CD4-positive, alpha-beta T cell (primary cell): ENCODE measurements at regions of chr9 and their contacts with region 1.

Region 1: DNA sequence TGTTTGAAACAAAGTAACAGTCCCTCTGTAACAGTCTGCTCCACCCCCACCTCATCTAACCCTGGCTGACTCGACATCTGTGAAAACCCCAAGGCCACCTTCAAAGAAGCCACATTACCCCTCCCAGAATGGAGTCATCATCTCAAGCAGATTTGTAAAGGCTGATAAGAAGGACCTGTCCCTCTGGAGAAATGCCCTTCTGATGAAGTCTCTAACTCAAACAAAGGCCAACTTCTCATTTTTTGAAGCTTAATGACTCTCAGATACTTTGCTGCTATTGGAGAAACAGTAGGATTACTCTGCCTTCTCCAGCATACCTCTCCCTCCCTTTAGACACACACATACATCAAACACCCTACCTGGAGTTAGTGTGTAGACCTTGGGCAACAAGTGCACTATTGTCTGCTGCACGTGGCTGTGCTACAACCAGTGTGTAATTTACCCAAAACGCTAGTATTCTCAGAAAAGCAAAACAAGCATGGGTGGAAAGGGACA is 5.3 kb upstream of the SUSD1 start:
- DNase-seq: peak in 9 of 14 experiments; percentile 10 to 86 (median 32)
- ATAC-seq: peak; percentile 31
- H3K4me3 ChIP-seq: no peak overlapping the region
- H3K4me3 Mint-ChIP-seq: peak overlapping the region; percentile 18
- H3K27ac ChIP-seq: peak overlapping the region; percentile 0 to 26
- H3K27ac Mint-ChIP-seq: peak overlapping the region; percentile 60
- H3K4me1 ChIP-seq: peaks cover 48% of the 10 kb centered on the region
- H3K4me1 Mint-ChIP-seq: peaks cover 60% of the 10 kb centered on the region
- H3K27me3 ChIP-seq: no peaks in the 10 kb centered on the region
- H3K27me3 Mint-ChIP-seq: no peaks in the 10 kb centered on the region
- CTCF ChIP-seq: no peak

Region 2: GRCh38 chr9:112241516-112241915 is 61.1 kb after region 1 on chr9:
- CTCF ChIA-PET with region 1: no interaction called
- POLR2A ChIA-PET with region 1: no interaction called
- intact Hi-C with region 1: loop called in 1 of 2 experiments (anchors 5 kb)
- DNase-seq: no peak
- ATAC-seq: no peak
- H3K4me3 ChIP-seq: no peak overlapping the region
- H3K4me3 Mint-ChIP-seq: no peak overlapping the region
- H3K27ac ChIP-seq: no peak overlapping the region
- H3K27ac Mint-ChIP-seq: no peak overlapping the region
- H3K4me1 ChIP-seq: no peaks in the 10 kb centered on the region
- H3K4me1 Mint-ChIP-seq: peaks cover 10% of the 10 kb centered on the region
- H3K27me3 ChIP-seq: no peaks in the 10 kb centered on the region
- H3K27me3 Mint-ChIP-seq: no peaks in the 10 kb centered on the region
- CTCF ChIP-seq: no peak

Region 3: DNA sequence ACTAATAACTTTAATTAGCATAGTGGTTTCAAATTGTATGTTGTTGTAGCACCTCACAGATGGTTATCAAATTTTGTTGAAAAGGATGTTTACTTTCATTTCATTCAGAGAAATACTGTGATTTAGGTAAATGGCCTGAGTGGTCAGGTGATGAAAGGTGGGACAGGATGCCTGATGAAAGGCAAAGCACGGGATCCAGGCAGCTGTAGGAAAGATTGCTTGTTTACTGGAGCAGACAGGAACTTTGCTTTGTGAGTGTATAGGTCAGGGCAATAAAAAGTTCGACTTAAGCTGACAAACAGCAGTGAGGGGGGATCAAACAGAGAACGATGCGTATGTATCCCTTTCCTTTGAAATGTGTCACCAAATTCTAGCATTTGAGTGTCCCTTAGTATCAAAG is 325.2 kb after region 1 on chr9:
- CTCF ChIA-PET with region 1: no interaction called
- POLR2A ChIA-PET with region 1: no interaction called
- intact Hi-C with region 1: no loop called
- DNase-seq: no peak
- ATAC-seq: no peak
- H3K4me3 ChIP-seq: no peak overlapping the region
- H3K4me3 Mint-ChIP-seq: no peak overlapping the region
- H3K27ac ChIP-seq: no peak overlapping the region
- H3K27ac Mint-ChIP-seq: no peak overlapping the region
- H3K4me1 ChIP-seq: no peaks in the 10 kb centered on the region
- H3K4me1 Mint-ChIP-seq: no peaks in the 10 kb centered on the region
- H3K27me3 ChIP-seq: no peaks in the 10 kb centered on the region
- H3K27me3 Mint-ChIP-seq: no peaks in the 10 kb centered on the region
- CTCF ChIP-seq: no peak